Activated CD4-positive, alpha-beta T cell treated with anti-CD3 and anti-CD28 coated beads, Interleukin-2, amount 10 ng/mL, durations not matched to agents 7 days and 5 days (primary cell): ENCODE measurements at regions of chr12 and their contacts with region 1.

Region 1: DNA sequence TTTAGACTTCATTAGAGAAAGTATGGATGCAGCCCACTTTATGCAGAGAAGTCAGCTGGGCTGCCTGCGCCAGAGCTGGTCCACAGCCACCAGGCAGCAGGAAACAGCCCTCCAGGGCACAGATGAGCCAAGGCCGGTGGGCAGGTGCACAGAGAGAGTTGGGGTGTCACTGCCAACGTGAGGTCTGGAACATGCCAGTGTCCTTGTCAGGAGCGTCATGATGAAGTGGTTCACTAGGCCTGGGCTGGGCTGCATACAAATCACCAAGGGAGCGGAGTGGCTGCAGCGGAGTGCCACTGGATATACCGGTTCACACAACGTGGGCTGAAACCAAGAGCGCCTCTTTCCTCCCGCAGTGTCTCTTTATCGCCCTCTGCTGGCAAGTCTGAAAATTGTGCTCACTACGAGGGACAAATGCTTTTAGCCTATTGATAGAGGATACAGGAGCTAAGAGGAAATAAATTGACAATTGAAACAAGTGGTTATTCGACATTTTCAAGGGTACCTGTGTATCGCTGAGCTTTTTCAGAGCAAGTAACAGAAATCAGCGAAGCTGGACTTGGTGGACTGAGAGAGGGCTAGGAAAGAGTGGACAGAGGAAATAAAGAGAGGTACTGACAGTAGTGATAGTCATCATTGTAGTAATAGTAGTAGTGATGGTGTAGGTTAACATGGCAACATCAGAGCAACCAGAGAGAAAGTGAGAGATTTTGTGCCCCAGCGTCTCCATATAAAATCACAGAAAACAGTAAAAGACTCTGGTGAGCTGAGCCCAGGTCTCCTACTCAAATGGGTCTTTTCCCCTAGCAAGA is 52.0 kb upstream of the ITPR2 start:
- DNase-seq: peak; percentile 92
- H3K4me3 Mint-ChIP-seq: peak overlapping the region; percentile 26
- H3K27ac Mint-ChIP-seq: no peak overlapping the region
- H3K4me1 Mint-ChIP-seq: peaks cover 9% of the 10 kb centered on the region
- H3K27me3 Mint-ChIP-seq: peaks cover 16% of the 10 kb centered on the region

Region 2: DNA sequence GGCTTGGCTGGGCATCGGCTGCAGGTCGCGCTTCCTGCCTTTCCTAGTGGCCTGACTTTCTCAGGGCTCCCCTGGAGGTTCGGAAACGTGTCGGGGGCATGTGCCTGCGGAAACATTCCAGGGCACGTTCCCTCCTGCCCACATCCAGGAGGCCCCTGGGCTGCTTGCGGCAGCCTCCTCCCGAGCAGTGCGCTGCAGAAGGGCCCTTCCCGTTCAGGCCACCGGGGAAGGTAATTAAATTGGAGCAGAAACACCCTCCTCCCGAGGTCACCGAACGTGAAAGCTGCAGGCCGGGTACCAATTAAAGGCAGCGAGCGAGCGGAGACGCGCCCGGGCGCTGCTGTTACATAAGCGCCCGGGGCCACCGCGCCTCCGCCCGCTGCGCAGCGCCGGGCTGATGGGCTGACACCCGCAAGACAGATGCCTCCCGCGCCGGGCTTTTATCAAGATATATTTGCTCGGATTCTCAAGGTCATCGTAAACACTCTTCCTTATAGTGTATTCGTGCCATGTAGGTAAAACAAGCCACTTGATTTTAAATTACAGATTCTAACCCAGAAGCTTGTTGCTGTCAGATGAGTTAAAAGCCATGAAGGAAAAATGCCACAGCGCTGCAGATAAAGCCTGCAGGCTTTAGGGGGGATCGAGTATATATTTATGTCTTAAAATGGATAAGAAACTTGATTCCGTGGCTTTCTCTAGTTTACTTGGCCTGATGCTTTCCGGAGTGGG is 658.2 kb before region 1 on chr12:
- CTCF ChIA-PET with region 1: no interaction called
- POLR2A ChIA-PET with region 1: no interaction called
- DNase-seq: no peak
- H3K4me3 Mint-ChIP-seq: no peak overlapping the region
- H3K27ac Mint-ChIP-seq: no peak overlapping the region
- H3K4me1 Mint-ChIP-seq: no peaks in the 10 kb centered on the region
- H3K27me3 Mint-ChIP-seq: peaks cover 48% of the 10 kb centered on the region

Region 3: GRCh38 chr12:26566675-26567074 is 318.3 kb before region 1 on chr12:
- CTCF ChIA-PET with region 1: no interaction called
- POLR2A ChIA-PET with region 1: no interaction called
- DNase-seq: no peak
- H3K4me3 Mint-ChIP-seq: no peak overlapping the region
- H3K27ac Mint-ChIP-seq: no peak overlapping the region
- H3K4me1 Mint-ChIP-seq: no peaks in the 10 kb centered on the region
- H3K27me3 Mint-ChIP-seq: no peaks in the 10 kb centered on the region

Region 4: GRCh38 chr12:26783131-26783526 is 101.8 kb before region 1 on chr12:
- CTCF ChIA-PET with region 1: no interaction called
- POLR2A ChIA-PET with region 1: no interaction called
- DNase-seq: no peak
- H3K4me3 Mint-ChIP-seq: no peak overlapping the region
- H3K27ac Mint-ChIP-seq: no peak overlapping the region
- H3K4me1 Mint-ChIP-seq: no peaks in the 10 kb centered on the region
- H3K27me3 Mint-ChIP-seq: no peaks in the 10 kb centered on the region

Region 5: GRCh38 chr12:26832822-26833742 is 51.9 kb before region 1 on chr12 and contains the start of gene ITPR2:
- CTCF ChIA-PET with region 1: interaction called, 15 read pairs
- POLR2A ChIA-PET with region 1: no interaction called
- DNase-seq: peak; percentile 93
- H3K4me3 Mint-ChIP-seq: peak within 1 kb of the TSS; percentile 92
- H3K27ac Mint-ChIP-seq: peak within 1 kb of the TSS; percentile 96
- H3K4me1 Mint-ChIP-seq: peaks cover 42% of the 10 kb centered on the region
- H3K27me3 Mint-ChIP-seq: no peaks in the 10 kb centered on the region
- total RNA-seq, gene ITPR2: 40.3 to 40.5 TPM

Region 6: DNA sequence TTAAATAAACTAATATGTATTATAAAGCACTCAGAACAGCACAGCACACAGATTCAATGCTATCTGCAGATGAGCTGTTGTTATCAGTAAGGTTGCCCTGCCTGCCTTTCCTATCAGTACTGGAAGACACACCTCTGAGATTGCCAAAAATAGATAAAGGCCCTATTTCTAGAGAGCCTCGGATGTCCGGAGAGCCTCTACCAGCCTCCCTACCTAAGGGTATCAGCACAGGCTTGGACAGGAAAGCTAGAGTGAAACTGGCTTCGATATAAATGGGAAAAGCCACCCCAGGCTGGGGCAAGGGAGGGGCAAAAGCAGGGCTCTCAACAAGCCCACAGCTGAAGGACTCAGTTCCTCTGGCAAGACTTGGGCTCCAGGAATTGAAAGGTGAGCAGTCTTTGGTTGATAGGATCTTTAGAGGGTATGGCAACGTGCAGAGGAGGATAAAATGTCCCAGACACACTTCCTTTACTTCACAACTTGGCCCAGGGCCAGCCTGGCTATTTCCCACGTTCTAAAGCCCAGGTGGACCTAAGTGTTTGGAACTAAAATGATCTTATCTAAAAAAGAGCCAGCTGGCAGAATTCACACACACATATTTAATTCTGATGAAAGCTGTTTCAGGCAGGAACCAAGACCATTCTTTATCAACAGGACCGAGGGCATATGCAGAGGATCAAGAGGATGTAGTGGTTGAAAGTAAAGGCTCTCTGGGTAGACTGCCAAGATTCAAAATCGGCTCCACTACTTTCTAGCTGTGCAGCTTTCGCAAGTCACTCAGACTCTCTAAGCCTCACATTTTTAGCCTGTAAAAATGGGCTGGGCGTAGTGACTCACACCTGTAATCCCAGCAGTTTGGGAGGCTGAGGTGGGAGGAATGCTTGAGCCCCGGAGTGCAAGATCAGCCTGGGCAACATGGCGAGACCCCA is 14.2 kb before region 1 on chr12:
- CTCF ChIA-PET with region 1: interaction called, 16 read pairs
- POLR2A ChIA-PET with region 1: no interaction called
- DNase-seq: no peak
- H3K4me3 Mint-ChIP-seq: no peak overlapping the region
- H3K27ac Mint-ChIP-seq: no peak overlapping the region
- H3K4me1 Mint-ChIP-seq: peaks cover 25% of the 10 kb centered on the region
- H3K27me3 Mint-ChIP-seq: peaks cover 5% of the 10 kb centered on the region